ENCODE measurements at regions of chr11 and their contacts with region 1.

Region 1: DNA sequence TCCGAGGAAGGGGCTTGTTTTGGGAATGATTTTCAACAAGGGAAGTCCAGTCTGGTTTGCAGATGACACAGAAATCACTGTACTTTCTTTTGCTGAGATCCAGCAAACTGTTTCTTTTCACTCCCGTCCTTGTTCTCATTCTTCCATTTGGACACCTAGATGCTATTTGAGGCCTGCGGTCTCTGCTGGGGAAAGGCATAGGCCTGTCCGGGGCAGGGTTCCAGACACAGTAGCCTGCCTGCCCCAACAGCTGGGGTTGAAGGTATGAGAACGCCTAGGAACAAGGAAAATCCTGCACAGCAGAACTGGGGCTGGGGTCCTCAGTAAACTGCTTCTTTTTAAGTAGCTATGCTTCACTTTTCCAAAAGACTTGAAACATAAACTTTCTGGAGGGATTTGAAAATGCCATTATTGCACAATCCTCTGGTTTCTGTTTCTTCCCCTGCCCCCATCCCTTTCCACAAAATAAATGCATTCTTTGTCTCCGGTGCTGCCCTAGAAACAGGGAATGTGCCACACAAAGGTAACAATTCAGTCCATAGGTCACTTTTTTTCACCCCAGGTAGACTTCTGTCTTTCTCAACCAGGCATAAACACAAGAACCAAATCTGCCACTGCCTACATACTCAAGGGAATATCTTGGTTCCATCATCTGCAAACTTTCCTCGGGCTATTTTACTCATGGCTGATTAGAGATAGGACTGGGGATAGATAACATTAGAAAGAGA is 174.8 kb upstream of the MTMR2 start:
- DNase-seq: no peak

Region 2: DNA sequence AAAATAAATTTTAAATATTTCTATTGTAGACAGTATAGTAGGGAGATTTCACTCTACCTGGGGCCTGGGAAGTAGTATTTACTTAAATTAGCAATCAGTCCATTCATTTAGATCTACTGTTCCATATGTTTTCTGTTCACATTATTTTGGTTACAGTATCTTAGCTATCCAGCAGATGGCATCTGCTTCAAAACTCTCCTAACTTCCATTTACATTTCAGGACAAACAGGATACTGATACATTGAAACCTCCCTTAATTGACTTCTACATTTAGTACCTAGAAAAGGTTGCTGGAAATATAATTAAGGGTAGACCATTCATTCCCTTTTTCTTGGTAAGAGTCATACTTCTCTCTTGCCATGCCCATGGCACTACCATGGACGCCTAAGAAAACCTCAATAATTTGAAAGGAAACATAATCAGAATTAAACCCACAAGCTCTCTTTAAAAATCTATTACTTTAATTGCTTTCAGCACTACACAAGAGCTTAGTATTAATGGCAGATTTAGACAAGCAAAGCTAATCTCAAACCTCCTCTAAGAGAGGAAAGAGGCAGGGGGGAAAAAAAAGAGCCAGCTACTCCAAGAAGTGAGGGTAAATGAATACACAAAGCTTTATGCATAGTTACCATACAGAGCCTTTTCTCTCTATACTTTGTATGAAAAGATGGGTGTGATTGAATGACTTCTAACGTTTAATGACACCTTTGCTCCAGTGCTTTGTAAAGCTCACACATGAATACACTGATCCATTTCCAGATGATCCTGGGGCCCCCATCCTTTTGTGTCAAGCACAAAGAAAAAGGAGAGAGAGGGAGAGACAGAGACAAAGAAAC is 43.6 kb before region 1 on chr11:
- intact Hi-C with region 1: no loop called
- DNase-seq: no peak

Region 3: GRCh38 chr11:96168623-96169022 is 69.9 kb after region 1 on chr11:
- intact Hi-C with region 1: loop called (anchors 5 kb)
- DNase-seq: no peak

Region 4: GRCh38 chr11:96447208-96448110 is 348.8 kb after region 1 on chr11:
- intact Hi-C with region 1: no loop called
- DNase-seq: no peak

Measured in cardiac septum (tissue), 1 donor.